CD8-positive, alpha-beta T cell (primary cell): ENCODE measurements at regions of chr7 and their contacts with region 1.

Region 1: GRCh38 chr7:141654551-141654950 is 47.4 kb downstream of the DENND11 start:
- DNase-seq: peak; percentile 17 to 83 (median 61)
- ATAC-seq: peak; percentile 96
- H3K4me3 ChIP-seq: no peak overlapping the region
- H3K4me3 Mint-ChIP-seq: no peak overlapping the region
- H3K27ac ChIP-seq: no peak overlapping the region
- H3K27ac Mint-ChIP-seq: peak overlapping the region; percentile 58
- H3K4me1 ChIP-seq: no peaks in the 10 kb centered on the region
- H3K4me1 Mint-ChIP-seq: peaks cover 6% of the 10 kb centered on the region
- H3K27me3 ChIP-seq: no peaks in the 10 kb centered on the region
- H3K27me3 Mint-ChIP-seq: no peaks in the 10 kb centered on the region
- CTCF ChIP-seq: peak; percentile 72

Region 2: GRCh38 chr7:141533149-141533949 is 121.2 kb before region 1 on chr7:
- CTCF ChIA-PET with region 1: no interaction called
- POLR2A ChIA-PET with region 1: no interaction called
- intact Hi-C with region 1: no loop called
- DNase-seq: peak; percentile 19 to 80 (median 61)
- ATAC-seq: peak; percentile 56
- H3K4me3 ChIP-seq: no peak overlapping the region
- H3K4me3 Mint-ChIP-seq: no peak overlapping the region
- H3K27ac ChIP-seq: no peak overlapping the region
- H3K27ac Mint-ChIP-seq: no peak overlapping the region
- H3K4me1 ChIP-seq: no peaks in the 10 kb centered on the region
- H3K4me1 Mint-ChIP-seq: no peaks in the 10 kb centered on the region
- H3K27me3 ChIP-seq: no peaks in the 10 kb centered on the region
- H3K27me3 Mint-ChIP-seq: peaks cover 35% of the 10 kb centered on the region
- CTCF ChIP-seq: peak; percentile 90

Region 3: GRCh38 chr7:141585592-141586510 is 68.7 kb before region 1 on chr7:
- CTCF ChIA-PET with region 1: no interaction called
- POLR2A ChIA-PET with region 1: no interaction called
- intact Hi-C with region 1: no loop called
- DNase-seq: peak in 2 of 9 experiments; percentile 12 to 43
- ATAC-seq: no peak
- H3K4me3 ChIP-seq: no peak overlapping the region
- H3K4me3 Mint-ChIP-seq: no peak overlapping the region
- H3K27ac ChIP-seq: peak overlapping the region in 1 of 2 experiments; percentile 7
- H3K27ac Mint-ChIP-seq: peak overlapping the region; percentile 28
- H3K4me1 ChIP-seq: no peaks in the 10 kb centered on the region
- H3K4me1 Mint-ChIP-seq: peaks cover 39% of the 10 kb centered on the region
- H3K27me3 ChIP-seq: no peaks in the 10 kb centered on the region
- H3K27me3 Mint-ChIP-seq: no peaks in the 10 kb centered on the region
- CTCF ChIP-seq: no peak

Region 4: GRCh38 chr7:141641876-141642275 is 12.7 kb before region 1 on chr7:
- CTCF ChIA-PET with region 1: interaction called, 20 read pairs
- POLR2A ChIA-PET with region 1: no interaction called
- intact Hi-C with region 1: no loop called
- DNase-seq: no peak
- ATAC-seq: no peak
- H3K4me3 ChIP-seq: no peak overlapping the region
- H3K4me3 Mint-ChIP-seq: no peak overlapping the region
- H3K27ac ChIP-seq: no peak overlapping the region
- H3K27ac Mint-ChIP-seq: no peak overlapping the region
- H3K4me1 ChIP-seq: no peaks in the 10 kb centered on the region
- H3K4me1 Mint-ChIP-seq: no peaks in the 10 kb centered on the region
- H3K27me3 ChIP-seq: no peaks in the 10 kb centered on the region
- H3K27me3 Mint-ChIP-seq: no peaks in the 10 kb centered on the region
- CTCF ChIP-seq: no peak

Region 5: GRCh38 chr7:141665208-141666035 is 10.9 kb after region 1 on chr7:
- CTCF ChIA-PET with region 1: interaction called, 14 read pairs
- POLR2A ChIA-PET with region 1: interaction called, 3 read pairs
- intact Hi-C with region 1: no loop called
- DNase-seq: no peak
- ATAC-seq: no peak
- H3K4me3 ChIP-seq: no peak overlapping the region
- H3K4me3 Mint-ChIP-seq: no peak overlapping the region
- H3K27ac ChIP-seq: no peak overlapping the region
- H3K27ac Mint-ChIP-seq: peak overlapping the region; percentile 39
- H3K4me1 ChIP-seq: no peaks in the 10 kb centered on the region
- H3K4me1 Mint-ChIP-seq: peaks cover 2% of the 10 kb centered on the region
- H3K27me3 ChIP-seq: no peaks in the 10 kb centered on the region
- H3K27me3 Mint-ChIP-seq: no peaks in the 10 kb centered on the region
- CTCF ChIP-seq: no peak

Region 6: GRCh38 chr7:141701489-141702046 is 47.0 kb after region 1 on chr7:
- CTCF ChIA-PET with region 1: interaction called, 55 read pairs
- POLR2A ChIA-PET with region 1: interaction called, 3 read pairs
- intact Hi-C with region 1: loop called (anchors 2 to 5 kb)
- DNase-seq: peak; percentile 50 to 93 (median 76)
- ATAC-seq: peak; percentile 86
- H3K4me3 ChIP-seq: peak overlapping the region; percentile 57
- H3K4me3 Mint-ChIP-seq: peak overlapping the region; percentile 89
- H3K27ac ChIP-seq: peak overlapping the region; percentile 63 to 74
- H3K27ac Mint-ChIP-seq: peak overlapping the region; percentile 92
- H3K4me1 ChIP-seq: peaks cover 36% of the 10 kb centered on the region
- H3K4me1 Mint-ChIP-seq: peaks cover 50% of the 10 kb centered on the region
- H3K27me3 ChIP-seq: no peaks in the 10 kb centered on the region
- H3K27me3 Mint-ChIP-seq: no peaks in the 10 kb centered on the region
- CTCF ChIP-seq: no peak

Region 7: GRCh38 chr7:141710301-141710700 is 55.8 kb after region 1 on chr7:
- CTCF ChIA-PET with region 1: interaction called, 55 read pairs
- POLR2A ChIA-PET with region 1: interaction called, 3 read pairs
- intact Hi-C with region 1: loop called (anchors 1 to 5 kb)
- DNase-seq: peak in 3 of 9 experiments; percentile 22 to 39 (median 34)
- ATAC-seq: peak; percentile 44
- H3K4me3 ChIP-seq: no peak overlapping the region
- H3K4me3 Mint-ChIP-seq: no peak overlapping the region
- H3K27ac ChIP-seq: no peak overlapping the region
- H3K27ac Mint-ChIP-seq: no peak overlapping the region
- H3K4me1 ChIP-seq: no peaks in the 10 kb centered on the region
- H3K4me1 Mint-ChIP-seq: peaks cover 3% of the 10 kb centered on the region
- H3K27me3 ChIP-seq: no peaks in the 10 kb centered on the region
- H3K27me3 Mint-ChIP-seq: no peaks in the 10 kb centered on the region
- CTCF ChIP-seq: peak; percentile 14

Region 8: DNA sequence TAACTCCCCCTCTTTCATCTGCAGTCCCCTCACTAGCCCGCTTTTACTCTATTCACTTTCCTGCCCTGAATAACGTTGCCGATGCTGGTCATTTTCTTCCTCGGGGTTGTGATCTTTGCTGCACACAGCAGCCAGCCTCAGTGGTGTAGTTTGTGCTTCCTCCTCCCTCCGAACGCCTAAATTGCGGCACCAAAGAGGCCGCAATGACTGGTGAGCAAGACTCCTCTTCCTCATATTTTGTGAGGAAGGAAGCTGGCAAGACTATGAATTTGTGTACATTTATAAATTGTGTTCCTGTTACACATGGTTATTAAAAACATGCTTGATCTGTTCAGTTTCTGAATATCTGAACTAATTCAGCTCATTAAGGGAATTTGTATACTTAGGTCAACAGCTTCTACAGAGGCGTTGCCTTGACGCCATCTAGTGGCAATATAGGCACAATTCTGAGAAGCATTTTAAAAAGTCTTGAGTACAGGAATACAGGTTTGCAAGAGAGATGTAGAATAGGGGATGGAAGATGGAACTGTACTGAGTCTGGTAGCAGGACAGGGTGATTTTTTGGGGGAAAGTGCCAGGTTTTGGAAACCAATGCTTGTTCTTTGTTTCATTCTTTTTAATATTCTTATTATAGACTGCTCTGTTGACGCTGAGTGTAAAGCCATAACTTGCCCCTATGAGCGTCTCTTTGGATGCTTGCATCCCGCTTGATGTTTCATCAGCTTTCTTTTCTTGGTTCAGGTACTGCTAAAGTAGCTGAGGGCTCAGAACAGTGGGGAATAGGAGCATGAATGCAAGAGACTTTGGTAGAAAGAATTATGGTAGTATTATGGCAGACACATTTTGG is 131.4 kb after region 1 on chr7:
- CTCF ChIA-PET with region 1: interaction called, 57 read pairs
- POLR2A ChIA-PET with region 1: interaction called, 3 read pairs
- intact Hi-C with region 1: loop called (anchors 1 kb)
- DNase-seq: peak in 6 of 9 experiments; percentile 4 to 61 (median 24)
- ATAC-seq: no peak
- H3K4me3 ChIP-seq: no peak overlapping the region
- H3K4me3 Mint-ChIP-seq: no peak overlapping the region
- H3K27ac ChIP-seq: no peak overlapping the region
- H3K27ac Mint-ChIP-seq: no peak overlapping the region
- H3K4me1 ChIP-seq: no peaks in the 10 kb centered on the region
- H3K4me1 Mint-ChIP-seq: no peaks in the 10 kb centered on the region
- H3K27me3 ChIP-seq: no peaks in the 10 kb centered on the region
- H3K27me3 Mint-ChIP-seq: no peaks in the 10 kb centered on the region
- CTCF ChIP-seq: peak; percentile 85

Region 9: DNA sequence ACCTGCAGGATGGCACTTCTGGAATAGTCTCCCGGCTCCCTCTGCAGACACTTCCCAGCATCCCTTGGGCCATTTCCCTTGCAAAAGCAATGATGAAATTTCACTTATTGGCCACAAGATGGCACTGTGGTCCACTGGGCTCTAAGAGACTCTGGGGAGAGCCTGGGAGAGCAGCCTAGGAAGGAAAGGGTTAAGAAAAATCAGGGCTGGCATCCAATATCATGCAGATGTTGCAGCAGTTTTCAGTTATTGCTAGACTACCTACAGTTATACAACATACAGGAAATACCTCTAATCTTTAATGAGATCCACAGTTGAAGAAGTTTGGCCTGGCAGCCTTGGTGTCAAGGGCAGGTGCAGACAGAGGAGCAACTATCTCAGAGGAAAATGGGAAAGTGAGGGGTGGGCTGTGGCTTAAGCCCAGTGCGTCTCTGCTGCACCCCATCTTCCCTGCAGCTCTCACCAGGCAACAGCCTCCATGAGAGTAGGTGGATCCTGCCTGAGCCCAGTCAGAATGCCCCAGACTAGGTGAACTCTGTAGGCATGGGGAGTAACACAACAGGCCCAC is 703.5 kb after region 1 on chr7:
- CTCF ChIA-PET with region 1: no interaction called
- POLR2A ChIA-PET with region 1: no interaction called
- intact Hi-C with region 1: loop called in 1 of 2 experiments (anchors 5 kb)
- DNase-seq: peak in 4 of 9 experiments; percentile 19 to 69 (median 40)
- ATAC-seq: peak; percentile 54
- H3K4me3 ChIP-seq: no peak overlapping the region
- H3K4me3 Mint-ChIP-seq: no peak overlapping the region
- H3K27ac ChIP-seq: no peak overlapping the region
- H3K27ac Mint-ChIP-seq: no peak overlapping the region
- H3K4me1 ChIP-seq: peaks cover 33% of the 10 kb centered on the region
- H3K4me1 Mint-ChIP-seq: peaks cover 35% of the 10 kb centered on the region
- H3K27me3 ChIP-seq: no peaks in the 10 kb centered on the region
- H3K27me3 Mint-ChIP-seq: peaks cover 1% of the 10 kb centered on the region
- CTCF ChIP-seq: peak; percentile 77